ENCODE measurements at regions of chr1 and their contacts with region 1.

Region 1: DNA sequence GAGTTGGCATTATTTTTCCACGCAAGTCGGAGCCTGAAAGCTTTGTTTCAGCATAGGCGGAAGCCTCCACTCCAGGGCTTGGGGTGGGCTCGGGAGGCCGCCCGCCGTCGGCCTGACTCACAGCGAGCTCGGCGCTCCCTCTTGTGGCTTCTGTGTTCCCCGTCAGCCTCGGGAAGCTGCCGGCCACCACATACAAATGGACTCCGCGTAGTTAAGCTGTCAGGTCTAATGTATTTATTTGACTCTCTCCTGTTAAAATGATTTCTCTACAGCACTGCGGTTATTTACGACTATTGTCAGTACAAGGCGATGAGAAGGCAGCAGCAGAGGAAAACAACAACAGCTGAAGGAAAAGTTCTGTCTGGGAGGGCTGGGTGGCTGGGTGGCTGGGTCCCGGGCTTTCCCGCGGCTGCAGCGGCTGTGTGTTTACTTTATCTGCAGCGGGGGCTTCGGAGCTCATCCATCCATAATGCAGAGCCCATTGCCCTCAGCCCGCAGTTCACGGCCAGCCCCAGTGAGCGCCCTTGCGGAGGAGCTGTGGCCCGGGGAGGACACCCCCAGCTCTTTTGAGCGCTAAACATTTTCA is 375.7 kb upstream of the CAMK1G start:
- DNase-seq: peak; percentile 61 to 69
- ATAC-seq: peak; percentile 57 to 86 (median 75)
- H3K4me3 ChIP-seq: peak overlapping the region; percentile 38
- H3K27ac ChIP-seq: no peak overlapping the region
- H3K4me1 ChIP-seq: no peaks in the 10 kb centered on the region
- H3K27me3 ChIP-seq: peaks cover 0 to 26% (median 4%) of the 10 kb centered on the region in 3 donors
- CTCF ChIP-seq: peak; percentile 50

Region 2: DNA sequence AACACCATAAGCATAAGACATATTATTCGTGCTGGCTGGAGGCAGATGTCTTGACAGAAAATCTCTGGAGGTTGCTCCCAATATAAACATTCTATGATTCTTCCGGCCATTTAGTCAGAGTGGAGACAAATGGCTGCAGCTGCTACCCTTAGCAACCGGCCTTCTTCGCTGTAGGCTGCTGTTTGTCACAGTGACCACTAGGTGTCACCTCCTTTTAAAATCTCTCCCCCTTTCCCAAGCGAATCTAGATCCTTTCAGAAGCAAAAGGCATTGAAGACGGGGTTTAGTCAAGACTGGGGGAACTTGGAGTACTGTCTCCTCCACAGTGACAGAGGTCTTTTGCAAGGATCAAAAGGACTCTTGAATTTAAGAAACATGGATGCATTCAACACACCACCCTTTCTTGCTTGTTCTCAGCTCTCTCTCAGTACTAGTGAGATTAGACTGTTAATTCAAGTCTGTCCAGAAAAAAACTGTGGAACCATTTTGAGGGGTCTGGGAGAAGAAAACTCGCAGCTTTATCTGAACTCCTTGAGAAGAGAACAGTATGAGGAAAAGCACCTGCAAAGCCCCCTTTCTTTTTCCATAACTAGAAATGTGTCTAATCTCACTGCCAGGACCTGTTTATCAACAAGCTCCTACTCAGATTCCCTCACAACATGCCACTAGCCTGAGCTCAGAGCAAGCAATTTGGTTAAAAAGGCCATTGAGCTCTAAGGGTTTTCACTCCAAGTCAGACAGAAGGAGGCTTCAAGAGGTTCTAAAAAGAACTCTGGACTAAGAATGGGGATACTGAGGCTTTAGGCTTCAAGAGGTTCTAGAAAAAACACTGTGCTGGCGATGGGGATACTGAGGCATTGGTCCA is 555.3 kb before region 1 on chr1:
- intact Hi-C with region 1: loop called in 1 of 2 experiments (anchors 2 kb)
- DNase-seq: peak in 1 of 2 donors; percentile 16
- ATAC-seq: peak; percentile 42 to 75 (median 69)
- H3K4me3 ChIP-seq: no peak overlapping the region
- H3K27ac ChIP-seq: no peak overlapping the region
- H3K4me1 ChIP-seq: no peaks in the 10 kb centered on the region
- H3K27me3 ChIP-seq: peaks cover 0 to 5% (median 0%) of the 10 kb centered on the region in 3 donors
- CTCF ChIP-seq: peak; percentile 82

Region 3: DNA sequence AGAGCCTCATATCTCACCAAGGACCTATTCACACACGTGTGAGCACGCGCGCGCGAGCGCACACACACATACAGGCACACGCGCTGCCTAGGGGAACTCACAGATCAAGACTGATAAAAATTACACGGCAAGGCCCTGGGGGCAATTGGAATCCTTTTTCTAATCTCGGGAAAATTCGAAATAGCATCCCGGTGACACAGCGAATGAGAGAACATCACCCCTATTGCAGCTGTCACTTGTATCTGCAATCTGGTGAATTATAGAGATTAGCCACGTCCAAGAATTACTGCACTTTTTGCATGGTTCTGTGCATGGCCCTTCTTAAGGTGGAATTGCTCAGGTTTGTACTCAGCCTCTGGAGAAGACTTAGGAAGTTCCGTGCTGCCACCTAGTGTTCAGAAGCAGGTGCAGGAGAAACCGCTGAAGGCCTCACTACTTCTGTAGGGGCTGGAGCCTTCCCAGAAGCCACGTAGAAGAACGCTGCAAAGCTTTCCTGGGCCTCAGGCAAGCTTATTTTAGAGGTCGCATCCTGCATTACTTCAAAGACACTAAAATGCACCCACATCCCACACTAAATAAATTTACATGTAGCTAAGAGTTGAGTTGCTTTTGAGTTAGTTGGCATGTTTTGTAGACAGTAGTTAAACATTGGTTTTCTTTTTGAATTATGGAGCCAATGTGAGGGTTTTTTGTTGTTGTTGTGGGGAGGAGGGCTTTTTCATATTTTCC is 146.5 kb after region 1 on chr1:
- intact Hi-C with region 1: loop called in 1 of 2 experiments (anchors 10 kb)
- DNase-seq: peak; percentile 50 to 67
- ATAC-seq: peak; percentile 30 to 75 (median 68)
- H3K4me3 ChIP-seq: no peak overlapping the region
- H3K27ac ChIP-seq: no peak overlapping the region
- H3K4me1 ChIP-seq: no peaks in the 10 kb centered on the region
- H3K27me3 ChIP-seq: no peaks in the 10 kb centered on the region
- CTCF ChIP-seq: peak; percentile 64

Region 4: GRCh38 chr1:209565759-209566678 is 358.2 kb after region 1 on chr1:
- intact Hi-C with region 1: loop called in 1 of 2 experiments (anchors 2 kb)
- DNase-seq: peak; percentile 70 to 73
- ATAC-seq: peak; percentile 57 to 87 (median 82)
- H3K4me3 ChIP-seq: no peak overlapping the region
- H3K27ac ChIP-seq: no peak overlapping the region
- H3K4me1 ChIP-seq: no peaks in the 10 kb centered on the region
- H3K27me3 ChIP-seq: peaks cover 0 to 7% (median 0%) of the 10 kb centered on the region in 3 donors
- CTCF ChIP-seq: peak; percentile 64